GM12878 (cell line): ENCODE measurements at regions of chr1 and their contacts with region 1.

Region 1: DNA sequence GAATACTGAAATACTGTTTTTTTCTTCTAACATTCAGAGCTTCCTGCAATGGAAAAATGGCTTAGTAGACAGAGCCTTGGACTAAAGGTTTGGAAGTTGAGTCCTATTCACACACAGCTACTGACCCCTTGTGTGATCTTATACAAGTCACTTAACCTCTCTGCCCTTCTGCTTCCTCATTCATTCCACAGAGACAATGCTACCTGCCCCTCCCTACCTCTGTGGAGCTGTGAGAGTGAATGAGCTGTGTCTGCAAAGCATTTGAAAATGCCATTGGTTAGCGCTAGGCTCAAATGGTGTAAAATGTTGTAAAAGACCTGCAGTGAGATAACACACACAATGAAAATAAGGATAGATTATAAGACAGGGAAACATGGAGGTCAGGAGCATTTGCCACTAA is 214.4 kb downstream of the BARHL2 start:
- DNase-seq: no peak
- ATAC-seq: peak; percentile 24; the same call in 2 of the 3 replicates
- H3K4me3 ChIP-seq: no peak overlapping the region
- H3K27ac ChIP-seq: no peak overlapping the region
- H3K4me1 ChIP-seq: no peaks in the 10 kb centered on the region
- H3K27me3 ChIP-seq: no peaks in the 10 kb centered on the region
- CTCF ChIP-seq: no peak
- EP300 ChIP-seq: no peak
- POLR2A ChIP-seq: no peak
- RAD21 ChIP-seq: no peak

Region 2: GRCh38 chr1:90210631-90211491 is 291.8 kb before region 1 on chr1:
- CTCF ChIA-PET with region 1: no interaction called
- POLR2A ChIA-PET with region 1: no interaction called
- RAD21 ChIA-PET with region 1: no interaction called
- SMC1A ChIA-PET with region 1: no interaction called
- in situ Hi-C with region 1: no loop called
- intact Hi-C with region 1: no loop called
- DNase-seq: no peak
- ATAC-seq: no peak
- H3K4me3 ChIP-seq: no peak overlapping the region
- H3K27ac ChIP-seq: no peak overlapping the region
- H3K4me1 ChIP-seq: no peaks in the 10 kb centered on the region
- H3K27me3 ChIP-seq: no peaks in the 10 kb centered on the region
- CTCF ChIP-seq: no peak
- EP300 ChIP-seq: no peak
- POLR2A ChIP-seq: no peak
- RAD21 ChIP-seq: no peak

Region 3: DNA sequence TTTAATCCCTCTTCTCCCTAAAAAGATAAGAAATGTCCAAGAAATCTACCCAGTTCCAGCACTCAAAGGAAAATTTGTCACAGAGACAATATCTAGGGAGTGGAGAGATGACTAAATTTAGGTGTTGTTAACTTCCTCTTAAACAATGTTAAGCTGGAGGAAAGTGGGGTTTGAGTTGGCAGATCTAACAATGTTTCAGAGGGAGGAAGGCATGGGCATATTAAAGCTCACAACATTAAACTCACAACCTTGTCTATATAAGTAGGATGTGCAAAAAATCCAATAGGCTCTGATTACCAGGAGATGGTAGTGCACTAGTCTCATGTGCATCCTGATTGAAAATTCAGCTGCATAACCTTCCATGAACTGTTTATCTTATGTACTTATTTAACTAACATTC is 24.3 kb after region 1 on chr1:
- CTCF ChIA-PET with region 1: interaction called, 3 read pairs
- POLR2A ChIA-PET with region 1: interaction called, 7 read pairs
- RAD21 ChIA-PET with region 1: interaction called, 4 read pairs
- SMC1A ChIA-PET with region 1: interaction called, 19 read pairs
- in situ Hi-C with region 1: no loop called
- intact Hi-C with region 1: no loop called
- DNase-seq: no peak
- ATAC-seq: peak; percentile 57
- H3K4me3 ChIP-seq: no peak overlapping the region
- H3K27ac ChIP-seq: no peak overlapping the region
- H3K4me1 ChIP-seq: no peaks in the 10 kb centered on the region
- H3K27me3 ChIP-seq: no peaks in the 10 kb centered on the region
- CTCF ChIP-seq: no peak
- EP300 ChIP-seq: no peak
- POLR2A ChIP-seq: no peak
- RAD21 ChIP-seq: no peak

Region 4: GRCh38 chr1:90534663-90535295 is 32.1 kb after region 1 on chr1:
- CTCF ChIA-PET with region 1: interaction called, 6 read pairs
- POLR2A ChIA-PET with region 1: no interaction called
- RAD21 ChIA-PET with region 1: interaction called, 15 read pairs
- SMC1A ChIA-PET with region 1: interaction called, 21 read pairs
- in situ Hi-C with region 1: no loop called
- intact Hi-C with region 1: no loop called
- DNase-seq: no peak
- ATAC-seq: peak; percentile 64
- H3K4me3 ChIP-seq: no peak overlapping the region
- H3K27ac ChIP-seq: no peak overlapping the region
- H3K4me1 ChIP-seq: no peaks in the 10 kb centered on the region
- H3K27me3 ChIP-seq: peaks cover 0 to 3% of the 10 kb centered on the region in 2 experiments; a peak in 1 of 4 replicates
- CTCF ChIP-seq: no peak; a peak in 1 of 6 replicates
- EP300 ChIP-seq: 0 out of 4 replicates have a peak, but pooled peaks of 1 of the 2 experiments have one; percentile 28
- POLR2A ChIP-seq: no peak
- RAD21 ChIP-seq: no peak

Region 5: DNA sequence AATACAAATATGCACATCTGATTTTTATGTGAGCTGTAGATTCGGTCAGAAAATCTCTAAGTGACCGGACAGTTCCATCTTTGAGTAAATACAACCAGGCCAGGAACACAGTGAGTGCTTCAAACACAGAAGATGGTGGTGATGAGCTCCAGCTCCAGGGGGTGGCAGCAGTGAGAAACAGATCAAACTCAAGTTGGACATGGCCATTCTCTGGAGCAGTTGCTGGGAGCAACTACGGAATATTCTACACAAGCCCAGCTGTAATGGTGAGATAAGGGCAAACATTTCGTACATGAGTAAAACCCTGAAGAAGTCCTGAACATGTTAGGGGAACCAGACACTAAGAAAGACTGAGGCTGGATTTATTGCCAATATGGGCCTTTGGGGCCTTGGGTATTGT is 113.7 kb after region 1 on chr1:
- CTCF ChIA-PET with region 1: no interaction called
- POLR2A ChIA-PET with region 1: no interaction called
- RAD21 ChIA-PET with region 1: no interaction called
- SMC1A ChIA-PET with region 1: no interaction called
- in situ Hi-C with region 1: no loop called
- intact Hi-C with region 1: no loop called
- DNase-seq: no peak
- ATAC-seq: peak; percentile 59
- H3K4me3 ChIP-seq: no peak overlapping the region
- H3K27ac ChIP-seq: no peak overlapping the region
- H3K4me1 ChIP-seq: no peaks in the 10 kb centered on the region
- H3K27me3 ChIP-seq: no peaks in the 10 kb centered on the region
- CTCF ChIP-seq: peak; percentile 11 to 30 (median 20); a peak in 2 of 6 replicates
- EP300 ChIP-seq: no peak
- POLR2A ChIP-seq: no peak
- RAD21 ChIP-seq: peak; percentile 22; the same call in 1 of the 2 replicates